ENCODE measurements at regions of chr12 and their contacts with region 1.

Region 1: DNA sequence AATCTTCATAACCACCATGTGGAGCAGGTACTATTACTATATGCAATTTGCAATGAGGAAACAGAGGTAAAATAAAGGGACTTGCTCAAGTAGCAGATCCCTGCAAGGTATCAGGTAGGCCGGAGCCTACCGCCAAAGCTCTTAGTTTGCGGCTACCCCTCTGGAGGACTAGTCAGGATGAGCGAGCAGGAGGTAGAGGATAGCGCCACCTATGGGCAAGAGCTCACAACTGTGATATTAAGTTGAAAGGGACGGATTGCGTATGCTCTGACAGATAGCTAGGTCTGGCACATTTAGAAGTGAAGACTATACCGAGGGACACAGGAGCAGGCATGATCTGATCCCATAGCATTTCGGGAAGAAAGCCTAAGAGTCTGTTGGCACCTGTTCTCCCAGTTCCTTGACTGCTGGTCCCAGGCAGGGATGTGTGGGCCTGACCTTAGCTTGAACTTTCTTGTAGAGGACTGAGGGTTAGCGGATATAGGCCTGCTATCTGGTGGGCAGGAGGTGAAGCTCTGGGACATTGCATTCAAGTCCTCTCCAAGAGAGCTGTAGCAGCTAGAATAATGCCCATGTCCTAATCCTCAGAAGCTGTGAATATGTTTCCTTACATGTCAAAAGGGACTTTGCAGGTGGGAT is 48.0 kb downstream of the SLC17A8 start:
- DNase-seq: peak; percentile 51
- H3K4me3 Mint-ChIP-seq: no peak overlapping the region
- H3K27ac Mint-ChIP-seq: no peak overlapping the region
- H3K4me1 Mint-ChIP-seq: no peaks in the 10 kb centered on the region
- H3K27me3 Mint-ChIP-seq: peaks cover 4% of the 10 kb centered on the region

Region 2: DNA sequence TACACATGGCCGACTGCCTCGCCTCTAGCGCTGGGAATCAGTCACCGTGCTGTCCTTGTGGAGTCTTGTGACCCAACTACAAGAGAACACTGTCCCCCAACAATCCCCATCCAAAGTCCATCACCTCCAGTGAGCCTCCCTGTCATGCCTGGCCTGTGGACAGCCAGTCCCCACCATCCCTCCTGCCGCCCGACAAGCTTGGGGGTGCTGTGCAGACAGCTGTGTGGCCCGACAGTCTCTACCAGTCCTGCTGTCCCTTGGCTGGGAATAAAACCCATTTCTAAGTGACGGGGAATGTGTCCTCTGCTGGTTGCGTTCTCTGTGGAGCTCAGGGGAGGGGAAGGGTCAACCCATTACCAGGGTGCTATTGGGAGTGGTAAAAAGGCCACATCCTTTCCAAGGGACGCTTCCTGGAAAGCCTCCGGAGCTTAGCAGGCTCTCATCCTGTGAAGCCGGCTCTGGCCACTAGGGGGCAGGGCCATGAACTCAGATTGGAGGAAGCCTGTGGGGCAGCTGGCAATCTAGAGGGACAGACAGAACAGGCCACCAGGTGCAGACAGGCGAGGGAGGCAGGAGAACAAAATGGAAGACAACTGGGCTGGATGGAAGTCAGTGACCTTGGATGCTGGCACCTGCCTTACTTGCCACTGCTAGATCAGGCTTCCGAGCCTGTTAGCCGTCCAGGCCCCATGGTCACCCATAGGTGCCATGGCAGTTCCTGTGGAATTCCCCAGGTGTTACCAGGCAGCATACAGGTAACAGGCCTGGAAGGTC is 250.2 kb before region 1 on chr12:
- CTCF ChIA-PET with region 1: interaction called, 3 read pairs
- POLR2A ChIA-PET with region 1: no interaction called
- intact Hi-C with region 1: loop called (anchors 1 kb)
- DNase-seq: peak; percentile 83
- H3K4me3 Mint-ChIP-seq: no peak overlapping the region
- H3K27ac Mint-ChIP-seq: no peak overlapping the region
- H3K4me1 Mint-ChIP-seq: peaks cover 4% of the 10 kb centered on the region
- H3K27me3 Mint-ChIP-seq: no peaks in the 10 kb centered on the region

Region 3: GRCh38 chr12:100632445-100632892 is 227.6 kb after region 1 on chr12:
- CTCF ChIA-PET with region 1: no interaction called
- POLR2A ChIA-PET with region 1: no interaction called
- intact Hi-C with region 1: no loop called
- DNase-seq: no peak
- H3K4me3 Mint-ChIP-seq: no peak overlapping the region
- H3K27ac Mint-ChIP-seq: no peak overlapping the region
- H3K4me1 Mint-ChIP-seq: no peaks in the 10 kb centered on the region
- H3K27me3 Mint-ChIP-seq: no peaks in the 10 kb centered on the region

Measured in activated CD4-positive, alpha-beta memory T cell treated with anti-CD3 and anti-CD28 coated beads for 36 hours (primary cell).